CD4-positive, alpha-beta T cell (primary cell): ENCODE measurements at regions of chr11 and their contacts with region 1.

Region 1: GRCh38 chr11:65117216-65118096 is at the start of gene ZNHIT2:
- DNase-seq: peak; percentile 99 to 100 (median 100)
- ATAC-seq: peak; percentile 63
- H3K4me3 ChIP-seq: peak within 1 kb of the TSS; percentile 82
- H3K4me3 Mint-ChIP-seq: peak within 1 kb of the TSS; percentile 96
- H3K27ac ChIP-seq: peak within 1 kb of the TSS; percentile 79 to 85
- H3K27ac Mint-ChIP-seq: peak within 1 kb of the TSS; percentile 91
- H3K4me1 ChIP-seq: peaks cover 66% of the 10 kb centered on the region
- H3K4me1 Mint-ChIP-seq: peaks cover 52% of the 10 kb centered on the region
- H3K27me3 ChIP-seq: no peaks in the 10 kb centered on the region
- H3K27me3 Mint-ChIP-seq: no peaks in the 10 kb centered on the region
- CTCF ChIP-seq: peak; percentile 88
- total RNA-seq, gene ZNHIT2: 9.0 to 9.5 TPM

Region 2: GRCh38 chr11:64787526-64788320 is 329.7 kb before region 1 on chr11:
- CTCF ChIA-PET with region 1: no interaction called
- POLR2A ChIA-PET with region 1: no interaction called
- intact Hi-C with region 1: loop called in 1 of 2 experiments (anchors 5 kb)
- DNase-seq: peak; percentile 44 to 78 (median 58)
- ATAC-seq: peak; percentile 88
- H3K4me3 ChIP-seq: no peak overlapping the region
- H3K4me3 Mint-ChIP-seq: no peak overlapping the region
- H3K27ac ChIP-seq: no peak overlapping the region
- H3K27ac Mint-ChIP-seq: peak overlapping the region; percentile 69
- H3K4me1 ChIP-seq: peaks cover 13% of the 10 kb centered on the region
- H3K4me1 Mint-ChIP-seq: peaks cover 12% of the 10 kb centered on the region
- H3K27me3 ChIP-seq: no peaks in the 10 kb centered on the region
- H3K27me3 Mint-ChIP-seq: no peaks in the 10 kb centered on the region
- CTCF ChIP-seq: peak; percentile 82

Region 3: GRCh38 chr11:64924102-64924851 is 193.2 kb before region 1 on chr11 and contains the start of gene PPP2R5B:
- CTCF ChIA-PET with region 1: no interaction called
- POLR2A ChIA-PET with region 1: interaction called, 15 read pairs
- intact Hi-C with region 1: loop called (anchors 5 kb)
- DNase-seq: peak; percentile 79 to 95 (median 90)
- ATAC-seq: peak; percentile 92
- H3K4me3 ChIP-seq: peak within 1 kb of the TSS; percentile 69
- H3K4me3 Mint-ChIP-seq: peak within 1 kb of the TSS; percentile 95
- H3K27ac ChIP-seq: peak within 1 kb of the TSS; percentile 73 to 89
- H3K27ac Mint-ChIP-seq: peak within 1 kb of the TSS; percentile 97
- H3K4me1 ChIP-seq: peaks cover 30% of the 10 kb centered on the region
- H3K4me1 Mint-ChIP-seq: peaks cover 13% of the 10 kb centered on the region
- H3K27me3 ChIP-seq: no peaks in the 10 kb centered on the region
- H3K27me3 Mint-ChIP-seq: no peaks in the 10 kb centered on the region
- CTCF ChIP-seq: no peak
- total RNA-seq, gene PPP2R5B: 16.8 to 18.3 TPM

Region 4: GRCh38 chr11:65027213-65028067 is 90.0 kb before region 1 on chr11 and contains the start of gene SNX15:
- CTCF ChIA-PET with region 1: no interaction called
- POLR2A ChIA-PET with region 1: interaction called, 4 read pairs
- intact Hi-C with region 1: loop called in 1 of 2 experiments (anchors 1 kb)
- DNase-seq: peak; percentile 73 to 97 (median 86)
- ATAC-seq: peak; percentile 94
- H3K4me3 ChIP-seq: peak within 1 kb of the TSS; percentile 53
- H3K4me3 Mint-ChIP-seq: peak within 1 kb of the TSS; percentile 73
- H3K27ac ChIP-seq: peak within 1 kb of the TSS; percentile 22 to 52
- H3K27ac Mint-ChIP-seq: peak within 1 kb of the TSS; percentile 82
- H3K4me1 ChIP-seq: peaks cover 22% of the 10 kb centered on the region
- H3K4me1 Mint-ChIP-seq: peaks cover 21% of the 10 kb centered on the region
- H3K27me3 ChIP-seq: no peaks in the 10 kb centered on the region
- H3K27me3 Mint-ChIP-seq: no peaks in the 10 kb centered on the region
- CTCF ChIP-seq: peak; percentile 86
- total RNA-seq, gene SNX15: 13.9 to 14.7 TPM

Region 5: GRCh38 chr11:65095974-65096806 is 21.3 kb before region 1 on chr11 and contains the start of gene VPS51:
- CTCF ChIA-PET with region 1: interaction called, 58 read pairs
- POLR2A ChIA-PET with region 1: interaction called, 91 read pairs
- intact Hi-C with region 1: loop called (anchors 1 kb)
- DNase-seq: peak; percentile 76 to 94 (median 83)
- ATAC-seq: peak; percentile 85
- H3K4me3 ChIP-seq: peak within 1 kb of the TSS; percentile 79
- H3K4me3 Mint-ChIP-seq: peak within 1 kb of the TSS; percentile 96
- H3K27ac ChIP-seq: peak within 1 kb of the TSS; percentile 78 to 85
- H3K27ac Mint-ChIP-seq: peak within 1 kb of the TSS; percentile 98
- H3K4me1 ChIP-seq: peaks cover 23% of the 10 kb centered on the region
- H3K4me1 Mint-ChIP-seq: peaks cover 21% of the 10 kb centered on the region
- H3K27me3 ChIP-seq: no peaks in the 10 kb centered on the region
- H3K27me3 Mint-ChIP-seq: no peaks in the 10 kb centered on the region
- CTCF ChIP-seq: no peak
- total RNA-seq, gene VPS51: 243 to 246 TPM

Region 6: DNA sequence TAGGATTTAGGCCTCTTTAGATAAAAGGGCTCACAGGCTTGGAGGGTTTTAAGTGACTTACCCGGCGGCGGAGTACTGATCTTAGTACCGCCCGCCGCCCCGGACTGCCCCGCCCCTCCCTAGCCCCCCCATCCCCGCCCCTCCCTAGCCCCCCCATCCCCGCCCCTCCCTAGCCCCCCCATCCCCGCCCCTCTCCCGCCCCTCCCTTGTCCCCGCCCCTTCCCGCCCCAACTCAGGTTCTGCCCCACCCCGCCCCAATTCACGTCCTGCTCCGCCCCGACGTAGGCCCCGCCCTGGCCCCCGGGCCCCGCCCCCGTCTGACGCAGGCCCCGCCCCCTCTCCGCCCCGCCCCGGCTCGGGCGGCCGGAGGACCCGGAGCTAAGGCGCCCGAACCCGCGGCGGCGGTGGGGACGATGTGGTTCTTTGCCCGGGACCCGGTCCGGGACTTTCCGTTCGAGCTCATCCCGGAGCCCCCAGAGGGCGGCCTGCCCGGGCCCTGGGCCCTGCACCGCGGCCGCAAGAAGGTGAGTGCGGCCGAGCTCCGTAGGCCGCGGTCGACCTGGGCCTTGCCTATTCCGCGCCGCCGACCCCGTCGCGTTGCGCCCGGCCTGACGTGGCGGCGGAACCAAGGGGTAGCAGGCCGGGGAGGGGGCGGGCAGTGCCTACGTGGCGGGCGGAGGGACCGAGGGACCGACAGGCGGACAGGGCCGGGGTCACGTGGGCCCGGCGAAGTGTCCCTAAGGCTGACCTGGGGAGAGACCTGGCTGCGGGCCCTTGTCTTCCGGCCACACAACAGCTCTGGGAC is 407.5 kb after region 1 on chr11 and contains the start of gene SCYL1:
- CTCF ChIA-PET with region 1: no interaction called
- POLR2A ChIA-PET with region 1: no interaction called
- intact Hi-C with region 1: loop called in 1 of 2 experiments (anchors 10 kb)
- DNase-seq: peak; percentile 72 to 91 (median 81)
- ATAC-seq: peak; percentile 79
- H3K4me3 ChIP-seq: peak within 1 kb of the TSS; percentile 75
- H3K4me3 Mint-ChIP-seq: peak within 1 kb of the TSS; percentile 88
- H3K27ac ChIP-seq: peak within 1 kb of the TSS; percentile 60 to 84
- H3K27ac Mint-ChIP-seq: peak within 1 kb of the TSS; percentile 91
- H3K4me1 ChIP-seq: peaks cover 65% of the 10 kb centered on the region
- H3K4me1 Mint-ChIP-seq: peaks cover 58% of the 10 kb centered on the region
- H3K27me3 ChIP-seq: no peaks in the 10 kb centered on the region
- H3K27me3 Mint-ChIP-seq: no peaks in the 10 kb centered on the region
- CTCF ChIP-seq: no peak
- total RNA-seq, gene SCYL1: 57.4 to 60.7 TPM